Naive thymus-derived CD4-positive, alpha-beta T cell (primary cell): ENCODE measurements at regions of chr12 and their contacts with region 1.

Region 1: DNA sequence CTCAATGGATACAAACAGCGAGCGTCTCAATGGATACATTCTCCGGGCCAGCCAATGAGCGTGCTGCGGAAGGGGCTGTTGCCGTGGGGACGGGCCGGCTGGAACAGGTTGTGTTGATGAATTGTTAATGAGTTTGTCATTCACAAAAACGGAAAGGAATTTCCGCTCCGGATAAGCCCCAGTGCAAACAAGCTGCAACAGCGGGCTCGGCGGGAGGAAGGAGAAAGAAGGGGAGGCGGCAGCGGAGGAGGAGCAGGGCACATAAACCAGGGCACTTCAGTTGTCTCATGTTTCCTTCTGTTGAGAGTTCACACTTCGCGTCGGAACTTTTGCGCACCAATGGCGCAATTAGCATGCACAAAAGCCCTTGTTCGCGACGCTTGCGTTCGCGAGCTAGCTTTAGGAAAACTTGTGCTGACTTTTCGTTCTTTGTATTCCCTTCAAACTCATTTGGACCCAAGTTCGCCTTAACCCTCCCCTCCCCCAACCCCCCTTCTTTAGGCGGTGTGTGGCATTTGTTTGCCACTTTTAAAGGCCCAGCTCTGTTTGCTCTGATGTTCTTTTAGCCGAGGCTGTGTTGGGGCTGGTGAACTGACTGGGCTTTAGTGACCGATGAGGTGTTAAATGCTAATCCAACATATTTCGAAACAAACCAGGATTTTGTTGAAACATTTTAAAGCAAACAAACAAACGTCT is at the start of gene DUSP6:
- DNase-seq: peak; percentile 60 to 90 (median 83)
- ATAC-seq: peak; percentile 84
- H3K4me3 ChIP-seq: peak within 1 kb of the TSS; percentile 68
- H3K4me3 Mint-ChIP-seq: peak within 1 kb of the TSS; percentile 88 to 98 (median 90)
- H3K27ac ChIP-seq: peak within 1 kb of the TSS; percentile 35
- H3K27ac Mint-ChIP-seq: peak within 1 kb of the TSS; percentile 35 to 97 (median 79)
- H3K4me1 ChIP-seq: peaks cover 23 to 25% of the 10 kb centered on the region in 2 donors
- H3K4me1 Mint-ChIP-seq: peaks cover 19 to 55% (median 48%) of the 10 kb centered on the region in 7 donors
- H3K27me3 ChIP-seq: no peaks in the 10 kb centered on the region
- H3K27me3 Mint-ChIP-seq: peaks cover 0 to 4% (median 0%) of the 10 kb centered on the region in 5 donors
- total RNA-seq, gene DUSP6: 2.7 to 225 (median 33.8) TPM

Region 2: DNA sequence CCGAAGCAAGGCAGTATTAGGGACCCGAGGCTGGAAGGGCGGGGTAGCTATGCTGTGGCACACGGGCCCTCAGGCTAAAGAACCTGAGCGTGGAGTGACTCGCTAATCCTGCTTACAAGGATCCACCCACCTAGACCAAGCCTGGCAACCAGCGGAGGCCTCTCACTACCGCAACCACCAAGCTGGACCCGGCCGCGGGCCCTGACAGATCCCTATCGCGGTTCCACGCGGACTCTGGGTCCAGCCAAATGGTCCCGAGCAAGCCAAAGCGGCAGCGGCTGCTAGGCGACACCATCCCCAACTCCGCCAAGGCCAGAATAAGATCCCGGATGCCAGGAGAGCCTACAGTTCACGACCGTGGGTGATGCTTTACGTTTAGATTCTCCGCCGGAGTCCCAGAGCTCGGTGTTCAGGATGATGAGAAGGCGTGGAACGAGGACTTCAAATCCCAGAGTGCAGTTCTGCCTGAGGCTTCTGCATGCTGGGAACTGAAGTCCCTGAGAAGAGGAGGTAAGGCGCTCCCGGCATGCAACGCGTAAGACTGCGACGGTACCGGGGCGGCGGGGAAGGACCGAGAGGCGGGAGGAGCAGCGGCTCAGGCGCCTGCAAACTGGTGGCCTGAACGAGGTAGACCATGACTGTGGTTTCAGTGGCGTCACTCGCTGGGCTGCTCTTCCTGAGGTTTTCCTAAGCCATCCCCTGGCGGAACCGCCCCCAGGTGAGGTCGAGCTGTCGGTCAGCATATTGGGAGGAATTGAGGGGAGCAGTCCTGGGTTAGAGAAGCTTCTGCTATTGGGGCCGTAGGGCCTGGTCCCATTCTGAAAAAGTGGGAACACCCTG is 1210.7 kb before region 1 on chr12 and contains the starts of genes CEP290 and TMTC3:
- CTCF ChIA-PET with region 1: no interaction called
- POLR2A ChIA-PET with region 1: no interaction called
- intact Hi-C with region 1: loop called (anchors 1 to 2 kb)
- DNase-seq: peak; percentile 69 to 98 (median 94)
- ATAC-seq: peak; percentile 97
- H3K4me3 ChIP-seq: peak within 1 kb of the TSS; percentile 82
- H3K4me3 Mint-ChIP-seq: peak within 1 kb of the TSS; percentile 88 to 100 (median 96)
- H3K27ac ChIP-seq: peak within 1 kb of the TSS; percentile 84
- H3K27ac Mint-ChIP-seq: peak within 1 kb of the TSS; percentile 66 to 99 (median 94)
- H3K4me1 ChIP-seq: peaks cover 12 to 14% of the 10 kb centered on the region in 2 donors
- H3K4me1 Mint-ChIP-seq: peaks cover 26 to 68% (median 45%) of the 10 kb centered on the region in 7 donors
- H3K27me3 ChIP-seq: no peaks in the 10 kb centered on the region
- H3K27me3 Mint-ChIP-seq: no peaks in the 10 kb centered on the region
- total RNA-seq, gene CEP290: 14.7 to 29.5 (median 19.5) TPM
- total RNA-seq, gene TMTC3: 6.4 to 11.1 (median 7.5) TPM

Region 3: GRCh38 chr12:88781909-88782308 is 570.7 kb before region 1 on chr12:
- CTCF ChIA-PET with region 1: no interaction called
- POLR2A ChIA-PET with region 1: no interaction called
- intact Hi-C with region 1: no loop called
- DNase-seq: no peak
- ATAC-seq: no peak
- H3K4me3 ChIP-seq: no peak overlapping the region
- H3K4me3 Mint-ChIP-seq: no peak overlapping the region
- H3K27ac ChIP-seq: no peak overlapping the region
- H3K27ac Mint-ChIP-seq: no peak overlapping the region
- H3K4me1 ChIP-seq: no peaks in the 10 kb centered on the region
- H3K4me1 Mint-ChIP-seq: no peaks in the 10 kb centered on the region
- H3K27me3 ChIP-seq: no peaks in the 10 kb centered on the region
- H3K27me3 Mint-ChIP-seq: no peaks in the 10 kb centered on the region

Region 4: GRCh38 chr12:89051065-89051677 is 301.5 kb before region 1 on chr12:
- CTCF ChIA-PET with region 1: no interaction called
- POLR2A ChIA-PET with region 1: no interaction called
- intact Hi-C with region 1: loop called (anchors 1 to 2 kb)
- DNase-seq: peak in 7 of 9 donors; percentile 28 to 63 (median 51)
- ATAC-seq: peak; percentile 70
- H3K4me3 ChIP-seq: no peak overlapping the region
- H3K4me3 Mint-ChIP-seq: no peak overlapping the region
- H3K27ac ChIP-seq: no peak overlapping the region
- H3K27ac Mint-ChIP-seq: peak overlapping the region in 1 of 9 donors; percentile 34
- H3K4me1 ChIP-seq: no peaks in the 10 kb centered on the region
- H3K4me1 Mint-ChIP-seq: peaks cover 0 to 30% (median 0%) of the 10 kb centered on the region in 7 donors
- H3K27me3 ChIP-seq: no peaks in the 10 kb centered on the region
- H3K27me3 Mint-ChIP-seq: no peaks in the 10 kb centered on the region

Region 5: GRCh38 chr12:89225808-89226411 is 126.7 kb before region 1 on chr12:
- CTCF ChIA-PET with region 1: no interaction called
- POLR2A ChIA-PET with region 1: interaction called, 3 read pairs
- intact Hi-C with region 1: loop called (anchors 1 kb)
- DNase-seq: peak in 1 of 9 donors; percentile 47
- ATAC-seq: peak; percentile 26
- H3K4me3 ChIP-seq: no peak overlapping the region
- H3K4me3 Mint-ChIP-seq: peak overlapping the region in 8 of 10 donors; percentile 26 to 74 (median 54)
- H3K27ac ChIP-seq: no peak overlapping the region
- H3K27ac Mint-ChIP-seq: peak overlapping the region; percentile 38 to 94 (median 63)
- H3K4me1 ChIP-seq: peaks cover 16 to 17% of the 10 kb centered on the region in 2 donors
- H3K4me1 Mint-ChIP-seq: peaks cover 18 to 76% (median 48%) of the 10 kb centered on the region in 7 donors
- H3K27me3 ChIP-seq: no peaks in the 10 kb centered on the region
- H3K27me3 Mint-ChIP-seq: no peaks in the 10 kb centered on the region

Region 6: DNA sequence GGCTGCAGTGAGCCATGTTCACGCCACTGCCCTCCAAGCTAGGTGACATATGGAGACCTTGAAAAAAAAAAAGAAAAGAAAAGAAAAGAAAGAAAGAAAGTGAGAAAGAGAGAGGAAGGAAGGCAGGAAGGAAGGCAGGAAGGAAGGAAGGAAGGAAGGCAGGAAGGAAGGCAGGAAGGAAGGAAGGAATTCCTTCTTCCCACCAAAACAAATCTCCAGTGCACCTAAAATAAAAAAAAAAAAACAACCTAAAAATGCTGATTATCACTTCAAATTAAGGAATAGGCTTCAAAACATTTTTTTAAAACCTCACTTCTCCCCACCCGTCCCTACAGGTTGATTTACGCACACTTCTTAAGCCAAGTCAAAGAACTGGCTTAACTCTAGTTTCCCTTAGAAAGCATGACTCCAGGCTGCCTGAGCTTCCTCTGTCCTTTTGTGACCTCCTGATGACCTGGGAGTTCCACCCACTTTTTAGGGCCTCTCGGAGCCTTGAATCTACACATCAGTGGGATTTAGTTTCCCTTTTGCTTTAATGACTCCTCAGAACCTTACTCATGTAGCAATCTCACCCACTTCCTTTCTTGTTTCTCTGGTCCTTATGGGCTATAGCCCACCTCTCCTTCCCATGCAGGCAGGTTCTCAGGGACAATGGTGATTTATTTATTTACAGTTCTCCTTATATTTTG is 18.9 kb before region 1 on chr12:
- CTCF ChIA-PET with region 1: interaction called, 3 read pairs
- POLR2A ChIA-PET with region 1: interaction called, 4 read pairs
- intact Hi-C with region 1: loop called in 1 of 2 experiments (anchors 1 kb)
- DNase-seq: peak in 1 of 9 donors; percentile 12
- ATAC-seq: peak; percentile 88
- H3K4me3 ChIP-seq: no peak overlapping the region
- H3K4me3 Mint-ChIP-seq: peak overlapping the region in 8 of 10 donors; percentile 8 to 70 (median 52)
- H3K27ac ChIP-seq: no peak overlapping the region
- H3K27ac Mint-ChIP-seq: peak overlapping the region in 2 of 9 donors; percentile 29 to 60
- H3K4me1 ChIP-seq: peaks cover 0 to 8% of the 10 kb centered on the region in 2 donors
- H3K4me1 Mint-ChIP-seq: peaks cover 12 to 34% (median 14%) of the 10 kb centered on the region in 7 donors
- H3K27me3 ChIP-seq: no peaks in the 10 kb centered on the region
- H3K27me3 Mint-ChIP-seq: no peaks in the 10 kb centered on the region

Region 7: DNA sequence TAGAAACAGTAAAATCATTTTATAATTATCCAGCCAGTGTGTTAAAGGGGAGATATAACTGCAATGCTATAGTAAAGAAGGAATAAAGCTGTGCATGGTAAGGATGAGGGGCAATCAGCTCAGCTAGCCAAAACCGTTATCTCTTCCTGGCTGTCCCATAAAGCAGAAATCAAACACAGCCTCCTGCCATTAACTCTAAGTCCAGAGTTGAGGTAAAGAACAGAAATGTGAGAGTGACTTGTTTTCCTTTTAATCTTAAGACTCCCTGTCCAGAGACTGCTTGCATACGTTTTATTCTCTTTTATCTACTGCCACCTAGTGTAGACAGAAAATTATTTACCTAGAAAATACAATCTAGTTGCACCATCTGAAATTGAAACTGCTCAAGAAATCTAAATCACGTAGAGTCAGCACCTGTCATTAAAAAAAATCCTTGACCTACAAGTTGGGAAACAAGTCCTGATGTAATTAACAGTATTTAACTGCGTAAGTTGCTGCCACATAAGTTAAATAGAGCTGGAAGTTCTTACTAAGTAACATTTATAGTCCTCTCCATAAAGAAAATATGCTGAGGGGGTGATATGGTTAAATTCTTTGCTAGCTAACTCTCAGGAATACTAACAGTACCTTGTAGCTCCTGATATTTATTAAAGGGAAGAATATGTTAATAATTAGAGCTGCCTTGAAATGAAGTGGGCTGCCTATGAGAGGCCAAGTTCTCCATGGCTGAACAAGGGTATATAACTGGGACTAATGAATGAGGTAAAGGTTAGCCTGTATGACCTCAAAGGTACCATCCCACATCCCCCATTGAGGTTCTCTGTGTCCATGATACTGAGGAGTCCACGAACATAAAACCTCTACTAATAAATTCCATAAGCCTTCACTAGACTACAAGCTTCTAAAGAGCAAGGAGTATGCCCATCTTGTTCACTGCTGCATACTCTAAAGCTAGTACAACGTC is 109.3 kb after region 1 on chr12:
- CTCF ChIA-PET with region 1: interaction called, 5 read pairs
- POLR2A ChIA-PET with region 1: no interaction called
- intact Hi-C with region 1: loop called (anchors 1 to 2 kb)
- DNase-seq: peak in 6 of 9 donors; percentile 26 to 68 (median 54)
- ATAC-seq: peak; percentile 95
- H3K4me3 ChIP-seq: no peak overlapping the region
- H3K4me3 Mint-ChIP-seq: peak overlapping the region in 7 of 10 donors; percentile 10 to 81 (median 53)
- H3K27ac ChIP-seq: no peak overlapping the region
- H3K27ac Mint-ChIP-seq: peak overlapping the region in 6 of 9 donors; percentile 5 to 71 (median 41)
- H3K4me1 ChIP-seq: peaks cover 0 to 3% of the 10 kb centered on the region in 2 donors
- H3K4me1 Mint-ChIP-seq: peaks cover 7 to 52% (median 18%) of the 10 kb centered on the region in 7 donors
- H3K27me3 ChIP-seq: no peaks in the 10 kb centered on the region
- H3K27me3 Mint-ChIP-seq: no peaks in the 10 kb centered on the region

Region 8: DNA sequence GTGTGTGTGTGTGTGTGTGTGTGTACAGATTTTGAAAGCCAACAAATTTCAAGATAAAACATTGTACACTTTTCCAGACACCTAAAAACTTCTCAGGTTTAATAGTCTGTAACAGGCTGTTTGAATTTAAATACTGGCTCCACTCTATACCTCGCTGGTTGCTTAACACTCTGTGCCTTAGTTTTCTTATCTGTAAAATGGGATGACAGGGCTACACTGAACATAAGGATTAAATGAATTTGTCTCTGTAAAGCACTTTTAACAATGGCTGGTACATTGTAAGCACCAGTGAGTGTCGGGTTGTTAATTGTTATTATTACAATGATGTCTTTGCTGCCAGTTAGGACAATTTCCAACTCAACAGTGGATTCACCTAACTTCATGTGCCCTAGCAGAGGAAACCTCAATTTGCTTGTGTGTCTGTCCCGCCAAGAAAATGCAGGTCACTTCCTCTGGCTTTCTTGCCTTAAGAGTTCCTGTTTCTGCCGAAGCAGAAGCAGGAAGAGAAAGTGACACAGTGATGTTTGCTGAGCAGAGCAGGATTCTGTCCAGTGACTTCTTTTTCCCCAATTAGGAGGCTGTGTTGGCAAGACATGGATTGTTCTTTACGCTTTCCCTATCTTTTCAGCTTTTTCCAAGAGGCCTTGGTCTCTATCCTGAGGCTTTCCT is 510.0 kb after region 1 on chr12:
- CTCF ChIA-PET with region 1: no interaction called
- POLR2A ChIA-PET with region 1: no interaction called
- intact Hi-C with region 1: loop called (anchors 5 kb)
- DNase-seq: peak in 7 of 9 donors; percentile 46 to 66 (median 57)
- ATAC-seq: peak; percentile 49
- H3K4me3 ChIP-seq: peak overlapping the region; percentile 44
- H3K4me3 Mint-ChIP-seq: peak overlapping the region; percentile 78 to 86 (median 82)
- H3K27ac ChIP-seq: peak overlapping the region; percentile 87
- H3K27ac Mint-ChIP-seq: peak overlapping the region; percentile 96 to 99 (median 98)
- H3K4me1 ChIP-seq: peaks cover 23 to 30% of the 10 kb centered on the region in 2 donors
- H3K4me1 Mint-ChIP-seq: peaks cover 40 to 72% (median 53%) of the 10 kb centered on the region in 7 donors
- H3K27me3 ChIP-seq: no peaks in the 10 kb centered on the region
- H3K27me3 Mint-ChIP-seq: no peaks in the 10 kb centered on the region